Ovary (tissue), 10 donors: ENCODE measurements at regions of chr7 and their contacts with region 1.

Region 1: DNA sequence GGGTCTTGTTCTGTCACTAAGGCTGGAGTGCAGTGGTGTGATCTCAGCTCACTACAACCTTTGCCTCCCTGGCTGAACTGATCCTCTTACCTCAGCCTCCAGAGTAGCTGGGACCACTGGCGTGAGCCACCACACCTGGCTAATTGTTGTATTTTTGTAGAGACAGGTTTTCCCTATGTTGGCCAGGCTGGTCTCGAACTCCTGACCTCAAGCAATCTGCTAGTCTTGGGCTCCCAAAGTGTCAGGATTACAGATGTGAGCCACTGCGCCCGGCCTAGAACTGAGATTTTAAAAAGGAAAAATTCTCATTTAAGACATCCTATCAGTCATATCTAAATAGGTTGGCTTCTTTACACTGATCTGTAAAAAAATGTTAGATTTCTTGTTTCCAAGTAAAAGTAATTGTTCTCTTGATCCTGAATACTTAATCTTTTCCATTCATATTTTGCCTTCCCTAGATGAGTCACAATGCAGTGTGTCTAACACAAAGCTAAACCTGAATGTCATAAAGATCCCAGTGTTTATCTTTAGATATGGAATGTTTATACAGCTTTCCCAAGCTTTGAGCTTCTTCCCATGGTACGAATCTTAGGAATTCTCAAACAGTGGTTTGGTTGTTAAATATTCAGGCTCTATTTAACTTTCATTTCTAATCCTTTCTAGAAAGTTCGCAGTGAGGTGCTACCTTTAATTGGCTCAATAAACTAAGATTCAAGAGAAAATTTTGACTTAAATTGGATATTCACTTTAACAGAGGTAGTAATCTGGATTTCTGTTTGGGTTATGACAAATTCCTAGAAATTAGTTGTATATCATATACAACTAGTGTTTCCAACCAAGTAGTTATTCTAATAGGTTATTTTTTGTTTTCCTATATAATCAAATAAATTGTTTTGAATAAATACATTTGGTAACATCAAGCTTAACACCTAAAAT is 12.1 kb upstream of the LAMB1 start:
- DNase-seq: no peak
- H3K4me3 ChIP-seq: no peak overlapping the region
- H3K27ac ChIP-seq: no peak overlapping the region
- H3K4me1 ChIP-seq: no peaks in the 10 kb centered on the region
- H3K27me3 ChIP-seq: no peaks in the 10 kb centered on the region
- CTCF ChIP-seq: no peak
- EP300 ChIP-seq: no peak
- POLR2A ChIP-seq: no peak

Region 2: GRCh38 chr7:108063520-108063933 is 48.5 kb after region 1 on chr7:
- intact Hi-C with region 1: no loop called
- DNase-seq: no peak
- H3K4me3 ChIP-seq: no peak overlapping the region
- H3K27ac ChIP-seq: no peak overlapping the region
- H3K4me1 ChIP-seq: peaks cover 4% of the 10 kb centered on the region
- H3K27me3 ChIP-seq: no peaks in the 10 kb centered on the region
- CTCF ChIP-seq: no peak
- EP300 ChIP-seq: no peak
- POLR2A ChIP-seq: no peak

Region 3: DNA sequence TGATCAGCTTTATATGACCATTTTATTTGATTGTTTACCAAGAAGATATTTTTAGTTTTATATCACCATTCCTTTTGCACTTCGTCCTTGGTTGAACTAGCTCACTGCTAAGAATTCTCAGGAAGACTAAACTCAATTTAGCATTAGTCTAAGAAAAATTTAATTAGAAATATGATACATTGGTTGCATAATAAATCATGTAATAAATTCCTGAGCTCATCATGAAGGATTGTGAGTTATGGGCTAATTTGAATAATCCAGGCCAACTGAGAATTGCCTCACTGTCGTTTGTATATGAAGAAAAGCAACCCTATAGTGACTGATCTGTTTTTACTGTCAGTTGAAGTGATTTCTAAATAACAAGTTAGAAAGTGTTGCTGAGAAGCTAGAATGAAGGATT is 1280.1 kb after region 1 on chr7:
- intact Hi-C with region 1: loop called in 1 of 4 experiments (anchors 5 kb)
- DNase-seq: no peak
- H3K4me3 ChIP-seq: no peak overlapping the region
- H3K27ac ChIP-seq: no peak overlapping the region
- H3K4me1 ChIP-seq: no peaks in the 10 kb centered on the region
- H3K27me3 ChIP-seq: no peaks in the 10 kb centered on the region
- CTCF ChIP-seq: no peak
- EP300 ChIP-seq: no peak
- POLR2A ChIP-seq: no peak